Panc1 (cell line): ENCODE measurements at regions of chr15 and their contacts with region 1.

Region 1: DNA sequence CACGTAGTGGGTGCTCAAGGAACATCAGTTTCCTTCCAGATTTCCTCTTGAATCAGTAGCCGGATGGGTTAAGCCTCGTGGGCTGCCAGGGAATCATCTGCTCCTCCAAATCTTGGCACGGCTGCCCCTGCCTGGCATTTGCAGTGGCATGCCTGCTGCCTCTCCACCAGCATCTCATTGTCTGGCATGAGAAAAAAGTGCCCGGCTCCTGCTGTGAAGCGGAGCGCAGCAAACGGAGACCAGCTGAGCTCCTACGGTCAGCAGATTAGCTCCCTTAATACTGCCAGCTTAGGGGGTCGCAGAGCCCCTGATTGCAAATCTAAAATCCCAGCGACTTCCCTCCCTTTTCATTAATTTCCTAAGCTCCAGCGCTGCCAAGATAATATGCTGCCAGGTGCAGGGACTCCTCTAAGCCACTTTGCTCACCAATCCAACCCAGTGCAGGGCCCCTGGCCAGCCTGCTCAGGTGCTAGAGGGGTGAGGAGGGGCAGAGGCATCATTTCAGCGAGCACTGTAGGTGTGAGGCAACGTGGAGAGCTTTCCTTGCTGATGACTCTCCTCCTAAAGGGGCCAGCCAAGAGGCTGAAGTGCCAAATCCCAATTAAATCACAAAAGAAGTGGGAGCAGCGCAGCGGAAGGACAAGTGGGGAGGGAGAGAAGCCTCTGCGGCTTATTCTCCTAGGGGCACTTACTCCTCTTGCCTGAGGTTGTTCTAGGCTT is 49.6 kb upstream of the ST8SIA2 start:
- DNase-seq: no peak
- ATAC-seq: no peak
- H3K4me3 ChIP-seq: no peak overlapping the region
- H3K27ac ChIP-seq: no peak overlapping the region
- H3K4me1 ChIP-seq: no peaks in the 10 kb centered on the region
- H3K27me3 ChIP-seq: peaks cover 2% of the 10 kb centered on the region; the same call in 1 of the 2 replicates
- CTCF ChIP-seq: no peak

Region 2: DNA sequence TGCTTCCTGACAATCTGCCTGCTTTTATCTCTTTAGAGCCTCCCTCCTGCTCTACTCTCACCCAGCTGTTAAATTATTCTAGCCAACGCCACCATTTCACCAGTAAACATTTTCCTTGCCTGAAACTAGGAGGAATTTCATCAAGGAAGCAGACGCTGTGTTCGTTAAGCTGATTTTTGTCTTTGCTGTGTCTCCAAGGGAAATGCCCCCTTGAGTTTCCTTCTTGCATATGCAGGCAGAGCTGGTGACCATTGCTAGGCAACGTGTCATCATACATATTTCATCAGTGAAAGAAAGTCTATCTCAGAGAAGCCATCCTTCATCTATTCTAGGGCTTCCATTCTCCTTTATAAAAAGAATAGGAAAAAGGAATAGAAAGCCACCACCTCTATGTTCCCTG is 37.4 kb before region 1 on chr15:
- CTCF ChIA-PET with region 1: no interaction called
- POLR2A ChIA-PET with region 1: interaction called, 14 read pairs
- in situ Hi-C with region 1: no loop called
- intact Hi-C with region 1: no loop called
- DNase-seq: no peak
- ATAC-seq: no peak
- H3K4me3 ChIP-seq: no peak overlapping the region
- H3K27ac ChIP-seq: no peak overlapping the region
- H3K4me1 ChIP-seq: no peaks in the 10 kb centered on the region
- H3K27me3 ChIP-seq: 0 out of 2 replicates have a peak, but pooled peaks cover 2% of the 10 kb centered on the region
- CTCF ChIP-seq: peak; percentile 25; the same call in 1 of the 2 replicates